ENCODE measurements at regions of chr6 and their contacts with region 1.

Region 1: GRCh38 chr6:159789377-159790148 is at the start of gene TCP1:
- DNase-seq: peak; percentile 100
- H3K4me3 ChIP-seq: peak within 1 kb of the TSS; percentile 80 to 92
- H3K27ac ChIP-seq: peak within 1 kb of the TSS; percentile 96 to 98
- H3K4me1 ChIP-seq: peaks cover 0 to 72% (median 47%) of the 10 kb centered on the region in 4 donors
- H3K27me3 ChIP-seq: no peaks in the 10 kb centered on the region
- CTCF ChIP-seq: no peak

Region 2: DNA sequence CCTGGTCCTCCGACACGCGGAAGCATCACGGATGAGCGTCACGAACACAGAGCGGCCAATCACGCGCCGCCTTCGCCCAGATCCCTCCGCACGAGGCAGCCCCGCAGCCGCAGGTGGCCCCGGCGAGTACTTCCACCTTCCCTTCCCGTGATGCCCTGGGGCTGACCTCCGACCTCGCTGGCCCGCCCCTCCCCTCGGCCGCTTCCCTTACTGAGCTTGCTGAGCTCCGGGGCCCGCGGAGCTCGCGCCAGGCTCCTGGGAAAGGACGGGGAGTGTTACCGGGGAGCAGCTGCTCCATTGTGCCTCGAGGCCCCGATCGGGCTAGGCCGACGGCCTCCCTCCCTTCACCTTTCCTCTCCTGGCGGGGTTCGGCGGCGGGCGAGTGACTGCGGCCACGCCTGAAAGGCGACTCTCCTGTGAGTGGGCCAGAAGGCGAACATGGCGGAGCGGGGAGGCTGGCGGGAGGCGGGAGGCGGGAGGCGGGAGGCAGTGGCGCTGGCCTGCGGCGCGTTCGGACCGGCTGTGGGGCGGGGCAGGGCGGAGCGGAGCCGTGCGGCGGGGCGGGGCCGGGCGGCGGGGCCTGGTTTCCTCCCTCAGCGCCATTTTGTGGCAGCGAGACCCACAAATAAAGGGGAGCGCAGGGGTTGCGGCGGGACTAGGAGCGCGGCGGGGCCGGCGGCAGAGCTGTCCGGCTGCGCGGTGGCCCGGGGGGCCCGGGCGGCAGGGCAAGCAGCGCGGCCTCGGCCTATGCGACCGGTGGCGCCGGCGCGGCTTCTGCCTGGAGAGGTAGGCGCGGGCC is 62.4 kb before region 1 on chr6 and contains the start of gene WTAP:
- intact Hi-C with region 1: loop called (anchors 2 kb)
- DNase-seq: peak; percentile 93 to 98
- H3K4me3 ChIP-seq: peak within 1 kb of the TSS; percentile 84 to 96
- H3K27ac ChIP-seq: peak within 1 kb of the TSS; percentile 99
- H3K4me1 ChIP-seq: peaks cover 0 to 42% (median 22%) of the 10 kb centered on the region in 4 donors
- H3K27me3 ChIP-seq: no peaks in the 10 kb centered on the region
- CTCF ChIP-seq: no peak

Region 3: GRCh38 chr6:159807150-159807858 is 17.7 kb after region 1 on chr6:
- intact Hi-C with region 1: no loop called
- DNase-seq: no peak
- H3K4me3 ChIP-seq: no peak overlapping the region
- H3K27ac ChIP-seq: no peak overlapping the region
- H3K4me1 ChIP-seq: no peaks in the 10 kb centered on the region
- H3K27me3 ChIP-seq: no peaks in the 10 kb centered on the region
- CTCF ChIP-seq: no peak

Region 4: DNA sequence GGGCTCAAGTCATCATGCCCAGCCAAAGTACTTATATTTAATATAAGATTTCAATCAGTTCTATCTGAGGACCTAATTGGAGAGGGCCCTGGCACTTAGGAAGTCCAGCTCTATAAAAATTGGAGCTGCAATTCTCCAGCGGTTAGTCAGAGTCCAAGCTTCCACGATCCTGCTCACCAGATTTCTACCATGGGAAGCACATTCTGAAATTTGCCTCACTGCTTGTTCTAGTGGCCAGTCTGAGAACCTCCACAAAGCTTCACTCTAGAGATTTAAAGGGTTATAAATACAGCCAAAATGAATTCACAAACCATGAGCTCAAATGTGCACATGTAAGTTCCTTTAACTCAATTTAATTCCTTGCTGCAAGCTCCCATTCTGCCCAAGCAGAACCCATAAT is 44.0 kb after region 1 on chr6:
- intact Hi-C with region 1: loop called (anchors 5 kb)
- DNase-seq: peak in 1 of 2 donors; percentile 10
- H3K4me3 ChIP-seq: no peak overlapping the region
- H3K27ac ChIP-seq: peak overlapping the region; percentile 5 to 12
- H3K4me1 ChIP-seq: peaks cover 0 to 53% (median 18%) of the 10 kb centered on the region in 4 donors
- H3K27me3 ChIP-seq: no peaks in the 10 kb centered on the region
- CTCF ChIP-seq: peak; percentile 17 to 33

Region 5: DNA sequence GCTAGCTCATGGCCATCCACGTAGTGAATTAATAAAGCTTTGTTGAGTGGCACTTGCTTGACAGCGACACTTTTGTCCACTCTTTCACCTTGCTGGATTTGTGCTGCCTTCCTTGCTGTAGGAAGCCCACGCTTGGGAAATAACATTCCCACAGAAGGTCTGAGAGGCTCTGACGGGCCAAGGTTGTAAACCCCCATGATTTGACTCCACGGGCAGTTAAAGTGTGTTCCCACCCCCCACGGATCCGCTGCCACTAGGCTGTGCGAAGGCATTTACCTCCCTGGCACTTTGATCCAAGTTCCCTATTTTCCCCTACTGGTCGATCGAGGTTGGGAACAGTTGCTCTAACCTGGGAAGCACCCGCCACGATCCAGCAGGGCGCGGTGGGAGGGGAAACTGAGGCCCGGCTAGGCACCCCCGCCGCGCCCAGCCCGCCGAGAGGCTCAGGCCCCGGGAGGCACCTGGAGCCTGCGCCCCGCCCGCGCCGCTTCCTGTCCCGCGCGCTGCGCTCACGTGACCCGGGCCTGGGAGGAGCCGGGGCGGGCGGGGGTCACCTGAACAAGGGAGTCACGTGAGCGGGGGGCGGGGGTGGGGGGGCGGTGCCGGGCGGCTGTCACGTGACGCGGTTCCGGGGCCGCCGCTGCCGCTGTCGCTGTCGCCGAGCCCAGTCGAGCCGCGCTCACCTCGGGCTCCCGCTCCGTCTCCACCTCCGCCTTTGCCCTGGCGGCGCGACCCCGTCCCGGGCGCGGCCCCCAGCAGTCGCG is 179.1 kb after region 1 on chr6 and contains the start of gene IGF2R:
- intact Hi-C with region 1: loop called (anchors 5 kb)
- DNase-seq: peak; percentile 95 to 96
- H3K4me3 ChIP-seq: peak within 1 kb of the TSS; percentile 97 to 100
- H3K27ac ChIP-seq: peak within 1 kb of the TSS; percentile 89 to 91
- H3K4me1 ChIP-seq: peaks cover 0 to 37% (median 16%) of the 10 kb centered on the region in 4 donors
- H3K27me3 ChIP-seq: no peaks in the 10 kb centered on the region
- CTCF ChIP-seq: peak; percentile 17 to 35

Region 6: GRCh38 chr6:160226118-160226541 is 436.6 kb after region 1 on chr6:
- intact Hi-C with region 1: no loop called
- DNase-seq: no peak
- H3K4me3 ChIP-seq: no peak overlapping the region
- H3K27ac ChIP-seq: peak overlapping the region; percentile 41 to 70
- H3K4me1 ChIP-seq: peaks cover 0 to 61% (median 9%) of the 10 kb centered on the region in 4 donors
- H3K27me3 ChIP-seq: no peaks in the 10 kb centered on the region
- CTCF ChIP-seq: no peak

Measured in tibial artery (tissue), 4 donors.